Mammary epithelial cell (primary cell): ENCODE measurements at regions of chr2 and their contacts with region 1.

Region 1: GRCh38 chr2:225010804-225011203 is 31.5 kb downstream of the DOCK10 start:
- DNase-seq: peak; percentile 85
- H3K4me3 ChIP-seq: no peak overlapping the region
- H3K27ac ChIP-seq: peak overlapping the region; percentile 72
- H3K4me1 ChIP-seq: peaks cover 21% of the 10 kb centered on the region
- H3K27me3 ChIP-seq: no peaks in the 10 kb centered on the region
- CTCF ChIP-seq: no peak

Region 2: DNA sequence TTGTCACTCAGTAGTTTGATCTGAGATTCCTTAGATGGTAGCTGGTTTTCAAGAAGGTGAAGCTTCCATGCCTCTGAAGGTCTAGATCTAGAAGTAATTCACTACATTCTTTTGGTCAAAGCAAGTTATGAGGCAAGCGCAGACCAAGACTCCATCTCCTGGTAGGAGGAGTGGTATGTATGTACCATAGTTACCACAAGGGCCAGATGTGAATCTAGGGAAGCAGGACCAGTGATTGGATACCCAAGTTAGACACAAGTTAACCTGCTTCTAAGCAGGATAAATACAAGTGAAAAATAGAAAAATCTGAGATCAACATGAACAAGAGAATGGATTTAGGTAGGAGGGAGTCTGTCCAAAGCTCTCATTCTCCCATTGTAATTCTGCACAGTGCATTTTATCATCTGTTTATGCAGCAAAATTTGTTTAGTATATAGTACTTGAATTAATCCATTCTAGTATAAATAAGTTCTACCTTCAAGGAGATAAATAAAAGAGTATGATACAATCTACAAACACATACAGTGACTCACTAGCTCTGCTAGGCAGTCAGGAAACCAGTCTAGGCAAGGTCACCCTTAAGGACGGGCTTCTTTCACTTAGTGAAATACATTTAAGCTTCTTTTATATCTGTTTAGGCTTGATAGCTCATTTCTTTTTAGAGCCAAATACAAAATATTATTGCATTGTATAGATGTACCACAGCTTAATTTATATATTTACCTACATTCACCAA is 45.7 kb after region 1 on chr2:
- CTCF ChIA-PET with region 1: no interaction called
- dilution Hi-C with region 1: no loop called
- in situ Hi-C with region 1: no loop called
- intact Hi-C with region 1: no loop called
- DNase-seq: peak; percentile 19
- H3K4me3 ChIP-seq: no peak overlapping the region
- H3K27ac ChIP-seq: no peak overlapping the region
- H3K4me1 ChIP-seq: no peaks in the 10 kb centered on the region
- H3K27me3 ChIP-seq: no peaks in the 10 kb centered on the region
- CTCF ChIP-seq: no peak

Region 3: DNA sequence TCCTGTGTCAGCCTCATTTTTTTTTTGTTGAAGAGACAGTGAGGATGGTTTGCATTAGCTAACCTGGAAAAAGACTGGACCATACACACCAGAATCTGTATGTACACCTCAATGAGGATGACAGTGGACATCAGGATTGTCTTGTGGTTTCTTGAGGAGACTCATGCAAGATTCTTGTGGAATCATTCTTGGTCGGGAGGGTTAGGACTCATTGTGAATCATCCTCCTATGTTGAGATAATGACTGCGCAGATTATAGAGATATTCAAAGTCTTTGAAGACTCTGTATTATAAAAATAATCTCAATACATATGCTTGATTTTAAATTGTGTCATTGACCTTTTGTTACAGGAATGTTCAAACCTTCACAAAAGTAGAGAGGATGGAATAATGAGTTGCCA is 80.5 kb after region 1 on chr2:
- CTCF ChIA-PET with region 1: no interaction called
- dilution Hi-C with region 1: no loop called
- in situ Hi-C with region 1: no loop called
- intact Hi-C with region 1: loop called (anchors 2 kb)
- DNase-seq: peak; percentile 96
- H3K4me3 ChIP-seq: no peak overlapping the region
- H3K27ac ChIP-seq: peak overlapping the region; percentile 90
- H3K4me1 ChIP-seq: peaks cover 14% of the 10 kb centered on the region
- H3K27me3 ChIP-seq: no peaks in the 10 kb centered on the region
- CTCF ChIP-seq: no peak